Kidney (tissue), 22 donors: ENCODE measurements at regions of chr11 and their contacts with region 1.

Region 1: DNA sequence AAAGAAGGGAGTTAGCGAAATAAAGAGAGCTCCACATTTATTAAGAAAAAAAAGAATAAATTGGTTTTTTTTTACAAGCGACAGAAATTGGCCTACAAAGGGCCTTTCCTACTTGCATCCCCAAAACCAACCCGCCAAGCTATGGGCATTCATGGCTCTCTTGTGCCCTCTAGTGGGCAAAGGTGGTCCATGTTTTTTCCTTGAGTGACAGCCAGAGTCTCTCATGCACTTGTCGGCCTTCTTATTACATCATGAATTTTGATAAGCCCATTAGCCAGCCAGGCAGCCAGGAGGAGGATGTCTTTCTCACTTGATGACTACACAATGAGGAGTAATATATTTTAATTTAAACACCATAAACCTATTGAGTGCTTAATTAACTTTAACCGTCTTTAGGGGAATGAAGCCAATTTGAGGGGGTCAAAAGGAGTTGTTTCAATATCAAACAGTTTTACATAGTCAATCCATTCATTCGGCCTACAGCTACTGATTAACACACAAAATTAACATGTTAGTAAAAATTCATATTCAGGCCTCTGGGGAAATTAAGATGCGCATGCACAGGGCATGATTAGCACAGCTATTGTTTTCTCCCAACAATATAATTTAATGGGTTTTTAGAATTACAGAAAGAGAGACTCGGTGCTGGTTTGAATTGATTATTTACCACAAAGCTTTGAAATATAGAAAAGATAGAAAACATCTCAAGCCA is 85.5 kb downstream of the RCN1 start:
- DNase-seq: peak; percentile 70 to 94 (median 89)
- H3K4me3 ChIP-seq: no peak overlapping the region
- H3K27ac ChIP-seq: no peak overlapping the region
- H3K4me1 ChIP-seq: peaks cover 0 to 4% (median 0%) of the 10 kb centered on the region in 3 donors
- H3K27me3 ChIP-seq: no peaks in the 10 kb centered on the region
- CTCF ChIP-seq: peak; percentile 95

Region 2: GRCh38 chr11:32052218-32052617 is 124.2 kb before region 1 on chr11:
- intact Hi-C with region 1: loop called (anchors 5 kb)
- DNase-seq: peak; percentile 58 to 82 (median 63)
- H3K4me3 ChIP-seq: no peak overlapping the region
- H3K27ac ChIP-seq: no peak overlapping the region
- H3K4me1 ChIP-seq: no peaks in the 10 kb centered on the region
- H3K27me3 ChIP-seq: no peaks in the 10 kb centered on the region
- CTCF ChIP-seq: peak; percentile 79

Region 3: GRCh38 chr11:32233276-32233675 is 56.9 kb after region 1 on chr11:
- intact Hi-C with region 1: no loop called
- DNase-seq: no peak
- H3K4me3 ChIP-seq: no peak overlapping the region
- H3K27ac ChIP-seq: no peak overlapping the region
- H3K4me1 ChIP-seq: no peaks in the 10 kb centered on the region
- H3K27me3 ChIP-seq: no peaks in the 10 kb centered on the region
- CTCF ChIP-seq: no peak